Left cardiac atrium (tissue), 4 donors: ENCODE measurements at regions of chr7 and their contacts with region 1.

Region 1: GRCh38 chr7:74449809-74450397 is 3.8 kb upstream of the GTF2IRD1 start:
- DNase-seq: peak; percentile 43
- ATAC-seq: peak in 1 of 2 donors; percentile 38

Region 2: DNA sequence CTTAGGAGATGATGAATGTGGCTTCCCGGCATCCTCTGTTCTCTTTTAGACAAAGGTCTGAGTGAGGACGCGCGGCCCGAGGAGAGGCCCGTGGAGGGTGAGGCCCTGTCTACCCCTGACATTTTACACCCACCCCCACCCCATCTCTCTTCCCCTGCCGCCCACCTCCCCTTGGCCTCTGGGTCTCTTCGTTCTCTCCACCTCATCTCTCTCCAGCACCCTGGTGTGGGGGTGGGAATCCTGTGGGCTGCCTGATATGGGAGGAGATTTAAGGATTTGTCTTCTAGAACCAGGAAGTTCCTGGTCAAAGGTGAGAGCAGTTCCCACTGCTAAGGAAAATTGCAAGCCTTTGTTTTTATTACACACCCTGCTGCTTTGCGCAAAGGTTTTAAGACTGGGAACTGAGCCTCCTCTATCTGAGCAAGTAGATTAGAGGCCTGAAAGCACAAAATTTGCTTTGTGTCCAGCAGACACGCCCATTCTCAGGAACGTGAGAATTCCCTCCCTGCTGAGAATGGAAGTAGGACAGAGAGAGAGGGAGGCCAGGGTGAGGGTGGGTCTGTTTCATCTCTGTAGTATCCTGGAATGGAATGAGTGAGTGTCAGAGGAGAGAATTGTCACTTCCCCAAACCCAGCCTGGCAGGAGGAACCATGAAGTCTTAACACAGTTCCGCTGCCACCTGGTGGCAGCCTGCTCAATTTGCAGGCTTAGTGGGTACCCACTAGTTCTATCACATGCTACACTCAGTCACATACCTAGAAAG is 95.0 kb after region 1 on chr7:
- intact Hi-C with region 1: loop called in 1 of 2 experiments (anchors 10 kb)
- DNase-seq: no peak
- ATAC-seq: peak in 1 of 2 donors; percentile 15

Region 3: GRCh38 chr7:74569501-74570075 is 119.7 kb after region 1 on chr7:
- intact Hi-C with region 1: loop called in 1 of 2 experiments (anchors 10 kb)
- DNase-seq: no peak
- ATAC-seq: no peak